CD4-positive, alpha-beta T cell (primary cell): ENCODE measurements at regions of chr1 and their contacts with region 1.

Region 1: DNA sequence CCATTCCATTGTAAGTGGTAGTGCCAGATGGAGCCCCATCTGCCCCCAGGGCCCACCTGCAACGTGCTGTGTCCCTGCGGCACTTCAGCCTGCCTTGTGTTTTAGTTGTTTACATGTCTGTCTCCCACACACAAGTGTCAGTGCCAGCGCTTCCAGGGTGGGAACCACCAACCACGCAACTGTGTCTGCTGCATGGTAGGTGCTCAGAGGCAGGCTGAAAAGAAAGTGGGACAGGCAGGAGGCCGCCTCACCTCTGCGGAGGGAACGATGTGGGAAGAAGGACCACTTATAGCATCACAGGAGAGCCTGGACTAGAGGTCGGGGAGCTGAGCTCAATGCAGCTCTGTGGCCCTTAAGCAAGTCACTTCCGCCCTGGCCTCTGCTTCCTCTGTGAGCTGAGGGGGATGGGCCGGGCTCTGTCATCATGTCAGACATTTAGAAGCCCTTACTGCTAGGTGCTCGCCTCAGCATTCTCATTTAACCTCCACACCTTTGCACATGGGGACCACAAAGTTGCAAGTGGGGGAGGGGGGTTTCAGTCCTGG is 17.9 kb downstream of the SLC9A1 start:
- DNase-seq: peak; percentile 61 to 87 (median 80)
- ATAC-seq: peak; percentile 96
- H3K4me3 ChIP-seq: peak overlapping the region; percentile 49
- H3K4me3 Mint-ChIP-seq: peak overlapping the region; percentile 80
- H3K27ac ChIP-seq: peak overlapping the region; percentile 80 to 93
- H3K27ac Mint-ChIP-seq: peak overlapping the region; percentile 98
- H3K4me1 ChIP-seq: peaks cover 52% of the 10 kb centered on the region
- H3K4me1 Mint-ChIP-seq: peaks cover 62% of the 10 kb centered on the region
- H3K27me3 ChIP-seq: no peaks in the 10 kb centered on the region
- H3K27me3 Mint-ChIP-seq: no peaks in the 10 kb centered on the region
- CTCF ChIP-seq: no peak

Region 2: DNA sequence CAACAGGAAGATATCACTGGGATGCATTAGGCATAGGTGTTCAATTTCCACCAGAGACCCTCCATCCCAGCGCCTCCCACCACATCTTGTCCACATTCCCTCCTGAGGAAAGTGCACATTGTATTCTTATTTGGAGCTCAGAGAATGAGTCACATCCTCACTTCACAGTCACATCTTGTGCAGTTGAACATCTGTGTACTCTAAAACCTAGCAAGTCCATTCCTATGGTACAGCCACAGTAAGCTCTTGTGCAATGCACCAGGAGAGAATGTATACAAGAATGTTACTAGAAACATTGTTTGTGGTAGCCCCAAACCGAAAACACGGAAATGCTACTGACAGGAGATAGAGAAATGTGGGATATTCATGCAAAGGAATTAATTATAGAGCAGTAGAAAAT is 175.2 kb before region 1 on chr1:
- CTCF ChIA-PET with region 1: no interaction called
- POLR2A ChIA-PET with region 1: no interaction called
- intact Hi-C with region 1: no loop called
- DNase-seq: no peak
- ATAC-seq: no peak
- H3K4me3 ChIP-seq: no peak overlapping the region
- H3K4me3 Mint-ChIP-seq: peak overlapping the region; percentile 17
- H3K27ac ChIP-seq: no peak overlapping the region
- H3K27ac Mint-ChIP-seq: no peak overlapping the region
- H3K4me1 ChIP-seq: peaks cover 18% of the 10 kb centered on the region
- H3K4me1 Mint-ChIP-seq: peaks cover 7% of the 10 kb centered on the region
- H3K27me3 ChIP-seq: peaks cover 6 to 13% of the 10 kb centered on the region in 2 experiments
- H3K27me3 Mint-ChIP-seq: peaks cover 39% of the 10 kb centered on the region
- CTCF ChIP-seq: no peak

Region 3: GRCh38 chr1:27111626-27112573 is 25.2 kb before region 1 on chr1:
- CTCF ChIA-PET with region 1: interaction called, 6 read pairs
- POLR2A ChIA-PET with region 1: interaction called, 22 read pairs
- intact Hi-C with region 1: no loop called
- DNase-seq: peak; percentile 46 to 87 (median 66)
- ATAC-seq: peak; percentile 99
- H3K4me3 ChIP-seq: no peak overlapping the region
- H3K4me3 Mint-ChIP-seq: peak overlapping the region; percentile 79
- H3K27ac ChIP-seq: peak overlapping the region; percentile 49 to 83
- H3K27ac Mint-ChIP-seq: peak overlapping the region; percentile 90
- H3K4me1 ChIP-seq: peaks cover 68% of the 10 kb centered on the region
- H3K4me1 Mint-ChIP-seq: peaks cover 64% of the 10 kb centered on the region
- H3K27me3 ChIP-seq: no peaks in the 10 kb centered on the region
- H3K27me3 Mint-ChIP-seq: no peaks in the 10 kb centered on the region
- CTCF ChIP-seq: peak; percentile 64

Region 4: GRCh38 chr1:27149084-27149761 is 12.2 kb after region 1 on chr1:
- CTCF ChIA-PET with region 1: interaction called, 14 read pairs
- POLR2A ChIA-PET with region 1: interaction called, 179 read pairs
- intact Hi-C with region 1: loop called in 1 of 2 experiments (anchors 1 kb)
- DNase-seq: no peak
- ATAC-seq: no peak
- H3K4me3 ChIP-seq: no peak overlapping the region
- H3K4me3 Mint-ChIP-seq: no peak overlapping the region
- H3K27ac ChIP-seq: no peak overlapping the region
- H3K27ac Mint-ChIP-seq: peak overlapping the region; percentile 40
- H3K4me1 ChIP-seq: peaks cover 53% of the 10 kb centered on the region
- H3K4me1 Mint-ChIP-seq: peaks cover 61% of the 10 kb centered on the region
- H3K27me3 ChIP-seq: no peaks in the 10 kb centered on the region
- H3K27me3 Mint-ChIP-seq: no peaks in the 10 kb centered on the region
- CTCF ChIP-seq: no peak